ENCODE measurements at regions of chr3 and their contacts with region 1.

Region 1: DNA sequence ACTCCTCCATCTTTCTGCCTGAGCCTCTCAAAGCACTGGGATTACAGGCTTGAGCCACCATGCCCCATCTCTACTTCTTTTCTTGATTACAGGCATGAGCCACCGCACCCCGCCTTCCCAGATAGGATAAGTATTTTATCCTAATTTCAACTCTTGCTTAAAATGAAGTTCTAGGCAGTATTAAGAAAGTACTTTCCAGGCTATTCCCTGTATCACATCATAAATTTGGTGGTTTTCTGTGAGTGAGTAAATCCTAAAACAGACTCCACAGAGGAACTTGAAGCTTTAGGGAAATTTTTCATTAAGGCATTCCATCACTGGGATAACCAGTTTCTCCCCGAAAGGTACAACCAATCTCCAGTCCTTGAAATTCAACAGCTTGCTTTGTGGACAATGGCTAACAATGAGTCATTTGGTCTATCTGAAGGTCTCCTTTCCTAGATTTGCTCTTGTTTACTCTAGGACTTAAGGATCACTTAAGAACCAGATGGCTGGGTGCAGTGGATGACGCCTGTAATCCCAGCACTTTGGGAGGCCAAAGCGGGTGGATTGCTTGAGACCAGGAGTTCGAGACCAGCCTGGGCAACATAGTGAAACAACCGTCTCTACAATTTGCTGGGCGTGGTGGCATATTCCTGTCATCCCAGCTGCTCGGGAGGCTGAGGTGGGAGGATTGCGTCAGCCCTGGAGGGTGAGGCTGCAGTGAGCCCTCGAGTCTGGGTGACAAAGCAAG is 49.7 kb upstream of the SKIL start:
- DNase-seq: no peak
- ATAC-seq: no peak
- H3K4me3 ChIP-seq: no peak overlapping the region
- H3K27ac ChIP-seq: no peak overlapping the region
- H3K4me1 ChIP-seq: no peaks in the 10 kb centered on the region
- H3K27me3 ChIP-seq: no peaks in the 10 kb centered on the region
- CTCF ChIP-seq: no peak
- EP300 ChIP-seq: no peak
- POLR2A ChIP-seq: no peak
- RAD21 ChIP-seq: no peak

Region 2: GRCh38 chr3:170330366-170330765 is 22.5 kb after region 1 on chr3:
- CTCF ChIA-PET with region 1: interaction called, 14 read pairs
- POLR2A ChIA-PET with region 1: no interaction called
- RAD21 ChIA-PET with region 1: interaction called, 3 read pairs
- SMC1A ChIA-PET with region 1: interaction called, 5 read pairs
- in situ Hi-C with region 1: no loop called
- intact Hi-C with region 1: no loop called
- DNase-seq: no peak
- ATAC-seq: peak; percentile 44
- H3K4me3 ChIP-seq: no peak overlapping the region
- H3K27ac ChIP-seq: no peak overlapping the region
- H3K4me1 ChIP-seq: 0 out of 2 replicates have a peak, but pooled peaks cover 5% of the 10 kb centered on the region
- H3K27me3 ChIP-seq: no peaks in the 10 kb centered on the region
- CTCF ChIP-seq: no peak
- EP300 ChIP-seq: no peak
- POLR2A ChIP-seq: no peak
- RAD21 ChIP-seq: no peak

Region 3: GRCh38 chr3:170368921-170369320 is 61.1 kb after region 1 on chr3:
- CTCF ChIA-PET with region 1: interaction called, 12 read pairs
- POLR2A ChIA-PET with region 1: no interaction called
- RAD21 ChIA-PET with region 1: interaction called, 10 read pairs
- SMC1A ChIA-PET with region 1: interaction called, 5 read pairs
- in situ Hi-C with region 1: no loop called
- intact Hi-C with region 1: loop called (anchors 1 kb)
- DNase-seq: no peak
- ATAC-seq: no peak; the same call in 2 of the 3 replicates
- H3K4me3 ChIP-seq: no peak overlapping the region
- H3K27ac ChIP-seq: no peak overlapping the region
- H3K4me1 ChIP-seq: peaks cover 9% of the 10 kb centered on the region
- H3K27me3 ChIP-seq: no peaks in the 10 kb centered on the region
- CTCF ChIP-seq: no peak; a peak in 2 of 6 replicates
- EP300 ChIP-seq: no peak
- POLR2A ChIP-seq: no peak
- RAD21 ChIP-seq: peak; percentile 37; the same call in 1 of the 2 replicates

Region 4: DNA sequence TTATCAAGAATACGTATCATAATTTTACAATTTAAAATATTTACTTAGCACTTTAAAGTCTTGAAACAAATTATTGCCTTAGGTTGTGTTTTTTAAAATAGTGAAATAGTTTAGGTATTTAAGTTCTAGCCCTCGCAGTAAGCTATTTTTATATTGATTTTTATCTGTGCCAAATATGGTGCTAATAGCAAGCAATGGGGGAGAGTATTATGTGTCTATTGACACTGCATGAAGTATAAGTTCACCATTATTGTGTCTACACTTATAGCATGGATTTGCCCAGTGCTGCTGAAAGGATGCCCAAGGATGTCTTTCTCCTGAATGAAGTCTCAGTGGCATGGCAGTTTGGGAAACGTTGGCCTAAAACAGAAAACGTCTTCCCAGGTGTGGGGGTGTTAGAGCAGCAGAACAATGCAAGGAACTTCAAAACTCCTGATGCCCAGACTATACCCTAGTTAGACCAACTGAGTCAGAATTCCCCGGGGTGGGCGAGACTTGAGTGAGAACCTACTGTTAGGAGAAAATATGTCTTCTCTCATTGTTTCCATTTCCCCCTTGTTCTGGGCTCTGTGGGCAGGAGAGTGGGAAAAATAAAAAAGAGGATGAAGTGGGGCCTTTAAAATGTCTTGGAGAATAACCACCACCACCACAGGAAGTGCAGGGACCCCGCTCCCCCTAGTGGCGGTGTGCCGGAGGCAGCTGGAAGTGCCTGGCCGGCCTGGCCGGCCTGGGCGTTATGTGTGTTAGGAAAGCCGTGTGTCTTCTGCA is 382.2 kb after region 1 on chr3:
- CTCF ChIA-PET with region 1: no interaction called
- POLR2A ChIA-PET with region 1: no interaction called
- RAD21 ChIA-PET with region 1: no interaction called
- SMC1A ChIA-PET with region 1: interaction called, 4 read pairs
- in situ Hi-C with region 1: no loop called
- intact Hi-C with region 1: loop called (anchors 2 kb)
- DNase-seq: no peak
- ATAC-seq: peak; percentile 81
- H3K4me3 ChIP-seq: no peak overlapping the region
- H3K27ac ChIP-seq: no peak overlapping the region
- H3K4me1 ChIP-seq: no peaks in the 10 kb centered on the region
- H3K27me3 ChIP-seq: no peaks in the 10 kb centered on the region; a peak in 1 of 4 replicates
- CTCF ChIP-seq: peak; percentile 69 to 81 (median 78)
- EP300 ChIP-seq: no peak
- POLR2A ChIP-seq: no peak
- RAD21 ChIP-seq: peak; percentile 86

Region 5: DNA sequence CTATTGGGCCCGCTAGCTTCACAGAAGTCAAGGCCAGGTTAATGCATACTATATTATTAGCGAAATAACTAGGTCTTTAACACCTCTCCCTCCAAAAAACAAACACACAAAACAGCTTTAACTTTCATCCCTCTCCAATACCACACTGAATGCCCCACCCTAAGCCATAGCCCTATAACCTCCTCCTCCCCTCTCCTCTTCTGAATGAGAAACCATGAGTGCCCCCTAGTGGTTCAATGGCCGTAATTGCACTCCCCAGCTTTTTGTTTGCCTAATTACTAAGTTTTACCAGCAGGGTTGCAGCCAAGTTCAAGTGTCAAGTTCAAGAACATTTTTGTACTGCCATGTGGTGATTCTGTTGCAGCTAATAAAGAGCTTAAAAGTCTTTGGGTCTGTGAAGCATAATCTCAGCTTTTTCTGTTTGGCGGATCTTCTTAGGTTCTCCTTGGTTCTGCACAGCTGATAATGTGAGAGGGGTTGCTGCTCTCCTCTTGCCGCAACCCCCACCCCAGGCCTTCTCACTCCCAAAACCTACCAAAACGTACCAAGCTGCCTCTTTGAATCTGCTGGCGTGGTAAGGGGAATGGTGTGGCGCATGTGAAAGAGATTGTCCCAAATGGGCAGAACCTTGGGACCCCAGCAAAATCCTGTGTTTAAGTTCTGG is 504.2 kb after region 1 on chr3:
- CTCF ChIA-PET with region 1: interaction called, 18 read pairs
- POLR2A ChIA-PET with region 1: no interaction called
- RAD21 ChIA-PET with region 1: interaction called, 5 read pairs
- SMC1A ChIA-PET with region 1: interaction called, 6 read pairs
- in situ Hi-C with region 1: loop called (anchors 5 kb)
- intact Hi-C with region 1: loop called (anchors 1 kb)
- DNase-seq: peak; percentile 30
- ATAC-seq: peak; percentile 91
- H3K4me3 ChIP-seq: no peak overlapping the region
- H3K27ac ChIP-seq: no peak overlapping the region
- H3K4me1 ChIP-seq: no peaks in the 10 kb centered on the region
- H3K27me3 ChIP-seq: no peaks in the 10 kb centered on the region; a peak in 2 of 4 replicates
- CTCF ChIP-seq: peak; percentile 85 to 95 (median 88)
- EP300 ChIP-seq: no peak
- POLR2A ChIP-seq: no peak
- RAD21 ChIP-seq: peak; percentile 93

Measured in GM12878 (cell line).